ENCODE measurements at regions of chr7 and their contacts with region 1.

Region 1: DNA sequence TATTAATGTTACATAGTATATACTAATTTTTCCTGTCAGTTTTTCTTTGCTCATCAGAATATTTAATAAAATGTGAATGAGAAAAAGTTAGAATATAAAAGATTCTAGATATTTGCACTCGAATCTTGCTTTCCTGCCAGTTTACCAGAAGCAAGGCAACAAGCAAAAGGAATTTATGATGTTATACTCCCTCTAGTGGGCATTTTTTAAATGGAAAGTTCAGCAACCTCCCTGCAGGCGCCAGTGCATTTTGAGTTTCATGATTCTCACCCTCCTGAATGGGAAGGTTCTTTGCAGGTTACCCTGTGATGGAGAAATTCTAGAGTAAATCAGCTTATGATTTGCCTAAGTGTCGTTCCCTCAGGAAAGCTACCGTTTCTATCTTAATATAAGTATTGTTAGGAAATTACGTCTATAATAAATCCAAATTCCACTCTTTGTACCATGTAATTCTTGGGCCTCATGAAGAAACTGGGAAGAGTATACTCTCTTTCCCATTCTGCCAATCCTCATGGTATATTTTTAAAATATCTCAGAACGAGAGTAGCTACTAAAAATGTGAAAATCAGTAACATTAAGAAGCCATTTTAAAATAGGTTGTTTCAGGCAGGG is 350.0 kb downstream of the CRPPA start:
- DNase-seq: peak; percentile 70
- H3K4me3 ChIP-seq: no peak overlapping the region
- H3K27ac ChIP-seq: no peak overlapping the region
- H3K4me1 ChIP-seq: peaks cover 12% of the 10 kb centered on the region
- H3K27me3 ChIP-seq: no peaks in the 10 kb centered on the region
- CTCF ChIP-seq: peak; percentile 41 to 57
- POLR2A ChIP-seq: no peak

Region 2: GRCh38 chr7:15199482-15199881 is 871.9 kb before region 1 on chr7:
- CTCF ChIA-PET with region 1: no interaction called
- POLR2A ChIA-PET with region 1: no interaction called
- dilution Hi-C with region 1: no loop called
- intact Hi-C with region 1: loop called (anchors 1 kb)
- DNase-seq: peak; percentile 51
- H3K4me3 ChIP-seq: no peak overlapping the region
- H3K27ac ChIP-seq: no peak overlapping the region
- H3K4me1 ChIP-seq: no peaks in the 10 kb centered on the region
- H3K27me3 ChIP-seq: no peaks in the 10 kb centered on the region
- CTCF ChIP-seq: peak; percentile 15 to 16
- POLR2A ChIP-seq: no peak

Region 3: DNA sequence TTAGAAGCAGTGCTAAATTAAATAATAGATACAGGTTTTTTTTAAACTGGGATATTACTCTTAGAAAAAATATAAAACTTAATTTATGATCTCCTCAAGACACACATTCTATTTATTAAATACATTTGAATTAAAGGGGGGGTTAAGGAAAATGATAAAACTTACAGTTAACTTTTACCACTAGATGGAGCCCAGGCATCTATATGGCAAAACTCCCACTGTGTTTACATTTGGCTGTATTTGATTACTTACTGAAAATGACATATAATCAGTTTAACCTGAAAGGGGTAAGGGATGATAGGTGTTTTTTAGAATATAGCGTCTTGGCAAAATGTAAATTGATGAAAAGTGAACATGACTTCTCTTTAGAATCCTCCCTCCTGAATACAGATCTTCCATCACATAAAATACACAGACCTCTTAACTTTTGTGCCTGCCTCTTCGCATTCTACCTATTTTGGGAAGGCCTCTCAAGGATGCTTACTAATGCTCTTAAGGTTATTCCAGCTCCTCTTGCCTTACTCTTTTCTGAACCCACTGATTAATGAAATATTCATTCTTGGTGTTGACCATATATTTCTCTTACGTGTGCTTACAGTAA is 745.2 kb before region 1 on chr7:
- CTCF ChIA-PET with region 1: interaction called, 5 read pairs
- POLR2A ChIA-PET with region 1: no interaction called
- dilution Hi-C with region 1: no loop called
- intact Hi-C with region 1: loop called (anchors 1 kb)
- DNase-seq: peak; percentile 72
- H3K4me3 ChIP-seq: no peak overlapping the region
- H3K27ac ChIP-seq: no peak overlapping the region
- H3K4me1 ChIP-seq: no peaks in the 10 kb centered on the region
- H3K27me3 ChIP-seq: no peaks in the 10 kb centered on the region
- CTCF ChIP-seq: peak; percentile 33 to 45
- POLR2A ChIP-seq: no peak

Region 4: GRCh38 chr7:15610503-15610902 is 460.8 kb before region 1 on chr7:
- CTCF ChIA-PET with region 1: interaction called, 3 read pairs
- POLR2A ChIA-PET with region 1: no interaction called
- dilution Hi-C with region 1: no loop called
- intact Hi-C with region 1: loop called (anchors 2 kb)
- DNase-seq: no peak
- H3K4me3 ChIP-seq: no peak overlapping the region
- H3K27ac ChIP-seq: no peak overlapping the region
- H3K4me1 ChIP-seq: no peaks in the 10 kb centered on the region
- H3K27me3 ChIP-seq: no peaks in the 10 kb centered on the region
- CTCF ChIP-seq: no peak
- POLR2A ChIP-seq: no peak

Region 5: DNA sequence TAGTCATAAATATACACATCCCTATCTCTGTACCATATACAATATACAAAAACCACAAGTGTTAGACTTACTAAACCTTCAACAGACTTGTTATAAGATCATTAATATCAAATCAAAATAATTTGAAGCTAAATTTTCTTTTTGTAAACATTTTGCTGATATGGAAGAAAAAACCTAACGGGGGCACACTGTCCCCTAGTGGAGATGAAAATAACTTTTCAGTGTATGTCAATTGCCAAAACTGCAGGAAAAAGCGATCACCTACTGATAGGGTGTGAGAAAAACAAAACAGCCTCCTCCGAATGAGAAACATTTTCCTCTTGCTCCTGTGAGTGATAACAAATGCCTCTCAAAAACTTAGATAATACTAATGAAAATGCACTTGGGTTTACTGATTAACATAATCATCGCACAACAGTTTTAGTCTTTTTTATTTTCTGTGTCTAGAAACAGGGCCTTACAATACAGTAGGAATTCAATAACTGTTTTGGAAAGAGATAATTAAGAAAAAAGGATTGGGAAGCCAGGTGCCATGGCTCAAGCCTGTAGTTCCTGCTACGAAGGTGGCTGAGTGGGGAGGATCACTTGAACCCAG is 27.3 kb after region 1 on chr7:
- CTCF ChIA-PET with region 1: interaction called, 19 read pairs
- POLR2A ChIA-PET with region 1: no interaction called
- dilution Hi-C with region 1: no loop called
- intact Hi-C with region 1: no loop called
- DNase-seq: peak; percentile 85
- H3K4me3 ChIP-seq: no peak overlapping the region
- H3K27ac ChIP-seq: peak overlapping the region; percentile 86
- H3K4me1 ChIP-seq: peaks cover 22% of the 10 kb centered on the region
- H3K27me3 ChIP-seq: no peaks in the 10 kb centered on the region
- CTCF ChIP-seq: peak; percentile 64 to 70
- POLR2A ChIP-seq: no peak

Measured in endothelial cell of umbilical vein (primary cell).